ENCODE measurements at regions of chr1 and their contacts with region 1.

Region 1: DNA sequence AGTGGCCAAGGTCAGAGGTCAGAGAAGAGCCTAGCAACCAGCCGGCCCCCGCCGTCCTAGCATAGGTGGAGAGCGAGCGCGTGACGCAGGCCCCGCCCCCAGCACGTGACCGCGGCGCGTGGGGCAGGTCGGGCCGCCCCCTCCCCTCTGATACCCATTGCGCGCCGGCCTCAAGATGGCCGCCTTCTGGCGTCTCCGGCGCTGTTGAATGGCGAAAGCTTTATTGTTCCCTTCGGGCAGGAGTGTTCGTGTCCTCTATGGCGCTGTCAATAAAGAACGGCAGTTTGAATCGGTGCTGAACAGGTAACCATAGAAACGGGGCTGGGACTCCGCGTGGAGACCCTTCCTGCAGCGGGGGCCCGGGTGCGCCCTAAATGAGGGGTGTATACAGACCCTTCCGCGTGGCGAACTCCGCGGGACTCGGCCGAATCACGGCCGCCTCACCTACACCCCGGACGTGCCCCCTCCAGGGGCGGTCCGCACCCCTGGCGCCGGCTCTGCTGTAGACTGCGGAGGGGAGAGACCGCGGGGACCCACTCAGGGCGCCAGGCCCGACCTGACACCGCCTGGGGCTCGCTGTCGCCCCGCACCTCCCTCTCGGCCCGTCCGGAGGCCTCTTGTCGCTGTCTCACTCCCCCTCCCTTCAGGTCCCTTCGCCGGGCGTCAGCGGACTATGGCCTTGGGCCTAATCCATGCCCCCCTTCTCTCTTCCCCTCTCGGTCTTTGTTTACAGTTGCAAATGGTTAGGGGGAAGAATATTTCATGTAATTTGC is at the start of gene ZBTB40:
- DNase-seq: peak; percentile 92 to 96 (median 94)
- ATAC-seq: peak; percentile 98
- H3K4me3 ChIP-seq: peak within 1 kb of the TSS; percentile 83
- H3K4me3 Mint-ChIP-seq: peak within 1 kb of the TSS; percentile 86 to 98 (median 92)
- H3K27ac ChIP-seq: peak within 1 kb of the TSS; percentile 85
- H3K27ac Mint-ChIP-seq: peak within 1 kb of the TSS; percentile 91 to 98 (median 95)
- H3K4me1 ChIP-seq: peaks cover 4 to 10% of the 10 kb centered on the region in 2 donors
- H3K4me1 Mint-ChIP-seq: peaks cover 11 to 52% (median 47%) of the 10 kb centered on the region in 7 donors
- H3K27me3 ChIP-seq: no peaks in the 10 kb centered on the region
- H3K27me3 Mint-ChIP-seq: peaks cover 0 to 4% (median 0%) of the 10 kb centered on the region in 5 donors
- total RNA-seq, gene ZBTB40: 23.1 to 60.6 (median 43.5) TPM

Region 2: DNA sequence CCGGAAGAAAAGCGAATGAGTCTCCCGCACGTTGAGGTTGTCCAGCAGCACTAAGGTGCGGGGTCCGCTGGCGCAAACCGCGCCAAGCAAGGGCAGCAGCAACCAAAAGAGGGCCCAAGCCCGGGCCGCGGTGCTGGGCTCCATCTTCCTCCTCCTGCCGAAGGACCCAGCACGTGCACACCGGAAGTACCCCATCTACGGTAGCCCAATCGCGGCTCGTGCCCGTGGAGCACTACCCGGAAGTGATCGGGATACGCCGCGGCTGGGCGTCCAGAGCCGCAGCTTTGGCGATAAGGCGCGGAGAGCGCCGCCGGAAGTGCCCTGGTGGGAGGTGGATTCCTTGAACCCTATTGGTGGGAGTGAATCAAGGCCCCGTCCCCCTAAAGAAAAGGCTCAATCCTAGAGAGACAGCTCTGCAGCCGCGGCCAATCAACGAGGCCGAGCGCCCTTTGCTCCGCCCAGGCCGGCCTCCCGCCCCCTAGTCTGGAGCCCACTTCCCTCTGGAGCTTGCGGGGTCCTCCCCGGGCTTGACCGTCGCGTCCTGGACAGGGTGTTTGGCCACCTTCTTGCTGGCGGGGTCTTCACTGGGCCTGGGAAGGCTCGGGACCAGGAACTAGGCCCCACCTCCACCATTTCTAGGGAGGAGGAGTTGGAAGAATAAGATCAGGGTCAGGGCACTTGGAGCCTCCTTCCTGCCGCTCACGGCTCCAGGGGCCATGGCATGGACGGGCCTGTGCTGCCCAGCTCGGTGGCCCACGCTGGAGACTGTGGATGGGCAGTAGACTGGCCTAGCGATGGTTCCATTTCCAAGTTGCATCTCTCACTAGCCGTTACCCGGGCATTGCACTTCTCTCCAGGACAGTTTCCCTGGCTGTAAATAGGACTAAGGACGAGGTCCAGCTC is 1790.4 kb before region 1 on chr1 and contains the start of gene DDOST:
- CTCF ChIA-PET with region 1: no interaction called
- POLR2A ChIA-PET with region 1: no interaction called
- intact Hi-C with region 1: loop called in 1 of 2 experiments (anchors 5 kb)
- DNase-seq: peak; percentile 78 to 96 (median 94)
- ATAC-seq: peak; percentile 98
- H3K4me3 ChIP-seq: peak within 1 kb of the TSS; percentile 93
- H3K4me3 Mint-ChIP-seq: peak within 1 kb of the TSS; percentile 89 to 99 (median 96)
- H3K27ac ChIP-seq: peak within 1 kb of the TSS; percentile 87
- H3K27ac Mint-ChIP-seq: peak within 1 kb of the TSS; percentile 85 to 99 (median 98)
- H3K4me1 ChIP-seq: peaks cover 21 to 24% of the 10 kb centered on the region in 2 donors
- H3K4me1 Mint-ChIP-seq: peaks cover 31 to 60% (median 41%) of the 10 kb centered on the region in 7 donors
- H3K27me3 ChIP-seq: no peaks in the 10 kb centered on the region
- H3K27me3 Mint-ChIP-seq: no peaks in the 10 kb centered on the region
- total RNA-seq, gene DDOST: 96.9 to 173 (median 109) TPM

Region 3: DNA sequence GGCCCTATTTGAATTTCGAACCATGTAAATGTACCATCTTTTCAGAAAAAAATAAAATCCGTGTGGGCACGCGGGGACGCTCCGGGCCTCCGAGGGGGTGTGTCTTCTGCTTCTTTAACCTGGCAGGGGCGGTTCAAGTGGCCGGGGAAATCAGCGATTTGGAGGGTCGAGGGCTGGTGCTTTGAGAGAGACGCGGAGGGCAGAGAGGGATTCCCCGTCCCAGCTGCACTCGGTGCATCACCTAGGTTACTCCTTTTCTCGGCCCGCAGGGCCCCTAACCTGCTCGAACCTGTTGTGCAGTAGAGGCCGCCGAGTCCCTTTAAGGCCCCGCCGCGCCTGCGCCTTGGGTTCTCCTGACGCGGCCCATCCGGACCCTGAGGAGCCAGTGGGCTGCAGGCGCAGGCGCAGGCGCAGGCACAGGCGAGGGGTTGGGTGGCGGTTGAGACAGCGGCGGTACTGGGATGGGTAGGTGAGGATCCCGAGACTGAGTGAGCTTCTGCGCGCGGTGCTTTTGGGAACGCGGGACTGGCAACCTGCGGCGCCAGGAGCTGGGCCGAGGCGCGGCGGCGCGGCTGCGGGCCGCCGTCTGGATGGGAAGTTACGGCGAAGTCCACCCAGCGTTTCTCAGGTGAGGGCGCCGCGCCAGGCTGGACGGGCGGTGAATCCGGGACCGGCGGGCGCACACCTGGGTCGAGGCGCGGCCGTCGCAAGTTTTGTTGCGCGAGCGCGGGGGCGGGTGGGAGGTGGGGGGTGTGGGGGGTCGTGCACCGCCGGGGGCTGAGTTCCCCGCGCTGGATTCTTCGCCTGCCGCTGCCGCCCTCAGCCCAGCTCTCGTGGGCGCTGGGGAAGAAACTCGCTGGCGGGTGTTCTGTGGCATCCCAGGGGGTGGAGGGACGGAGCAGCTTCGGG is 1011.9 kb before region 1 on chr1 and contains the start of gene NBPF3:
- CTCF ChIA-PET with region 1: no interaction called
- POLR2A ChIA-PET with region 1: no interaction called
- intact Hi-C with region 1: loop called in 1 of 2 experiments (anchors 10 kb)
- DNase-seq: peak; percentile 71 to 86 (median 83)
- ATAC-seq: peak; percentile 99
- H3K4me3 ChIP-seq: peak within 1 kb of the TSS; percentile 80
- H3K4me3 Mint-ChIP-seq: peak within 1 kb of the TSS; percentile 89 to 98 (median 94)
- H3K27ac ChIP-seq: peak within 1 kb of the TSS; percentile 74
- H3K27ac Mint-ChIP-seq: peak within 1 kb of the TSS; percentile 73 to 96 (median 92)
- H3K4me1 ChIP-seq: no peaks in the 10 kb centered on the region
- H3K4me1 Mint-ChIP-seq: peaks cover 20 to 35% (median 24%) of the 10 kb centered on the region in 7 donors
- H3K27me3 ChIP-seq: no peaks in the 10 kb centered on the region
- H3K27me3 Mint-ChIP-seq: peaks cover 0 to 42% (median 2%) of the 10 kb centered on the region in 5 donors
- total RNA-seq, gene NBPF3: 5.6 to 18.1 (median 12.0) TPM

Region 4: GRCh38 chr1:22431965-22432364 is 19.9 kb before region 1 on chr1:
- CTCF ChIA-PET with region 1: no interaction called
- POLR2A ChIA-PET with region 1: interaction called, 3 read pairs
- intact Hi-C with region 1: loop called in 1 of 2 experiments (anchors 2 kb)
- DNase-seq: no peak
- ATAC-seq: no peak
- H3K4me3 ChIP-seq: no peak overlapping the region
- H3K4me3 Mint-ChIP-seq: no peak overlapping the region
- H3K27ac ChIP-seq: no peak overlapping the region
- H3K27ac Mint-ChIP-seq: no peak overlapping the region
- H3K4me1 ChIP-seq: no peaks in the 10 kb centered on the region
- H3K4me1 Mint-ChIP-seq: peaks cover 0 to 7% (median 0%) of the 10 kb centered on the region in 7 donors
- H3K27me3 ChIP-seq: no peaks in the 10 kb centered on the region
- H3K27me3 Mint-ChIP-seq: peaks cover 10 to 27% (median 26%) of the 10 kb centered on the region in 5 donors

Region 5: GRCh38 chr1:23019094-23019862 is 567.4 kb after region 1 on chr1 and contains the start of gene KDM1A:
- CTCF ChIA-PET with region 1: no interaction called
- POLR2A ChIA-PET with region 1: no interaction called
- intact Hi-C with region 1: loop called in 1 of 2 experiments (anchors 5 kb)
- DNase-seq: peak; percentile 88 to 95 (median 92)
- ATAC-seq: peak; percentile 99
- H3K4me3 ChIP-seq: peak within 1 kb of the TSS; percentile 84
- H3K4me3 Mint-ChIP-seq: peak within 1 kb of the TSS; percentile 87 to 98 (median 98)
- H3K27ac ChIP-seq: peak within 1 kb of the TSS; percentile 76
- H3K27ac Mint-ChIP-seq: peak within 1 kb of the TSS; percentile 86 to 98 (median 93)
- H3K4me1 ChIP-seq: peaks cover 4 to 14% of the 10 kb centered on the region in 2 donors
- H3K4me1 Mint-ChIP-seq: peaks cover 16 to 52% (median 46%) of the 10 kb centered on the region in 7 donors
- H3K27me3 ChIP-seq: no peaks in the 10 kb centered on the region
- H3K27me3 Mint-ChIP-seq: no peaks in the 10 kb centered on the region
- total RNA-seq, gene KDM1A: 40.6 to 56.0 (median 47.7) TPM